WTC11 (cell line): ENCODE measurements at regions of chr18 and their contacts with region 1.

Region 1: DNA sequence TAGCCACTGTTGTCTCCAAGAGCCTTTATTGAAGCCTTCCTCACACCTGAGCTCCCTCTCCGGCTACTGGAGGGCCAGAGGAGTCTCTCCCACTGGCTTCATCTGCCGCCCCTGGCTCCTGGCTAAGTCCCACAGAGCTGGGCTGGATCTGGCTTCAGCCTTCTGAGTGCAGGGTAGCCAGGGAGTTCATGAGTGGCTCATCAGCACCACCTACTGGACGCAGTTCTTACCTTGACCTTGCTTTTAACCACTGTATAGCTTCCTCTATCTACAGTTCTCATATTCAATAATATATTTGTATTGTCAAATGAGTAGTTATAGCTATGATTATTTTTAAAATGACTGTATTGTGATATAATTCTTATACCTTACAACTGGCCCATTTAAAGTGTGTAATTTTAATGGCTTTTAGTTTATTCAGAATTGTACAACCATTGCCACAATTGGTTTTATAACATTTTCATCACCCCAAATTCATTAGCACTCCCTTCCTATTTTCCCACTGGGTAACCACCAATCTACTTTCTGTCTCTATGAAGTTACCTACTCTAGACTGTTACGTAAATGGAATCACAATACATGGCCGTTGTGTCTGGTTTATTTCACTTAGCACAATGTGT is 17.7 kb downstream of the CNDP1 start:
- DNase-seq: peak; percentile 87
- ATAC-seq: peak; percentile 100
- H3K4me3 Mint-ChIP-seq: no peak overlapping the region
- H3K27ac Mint-ChIP-seq: no peak overlapping the region
- H3K4me1 Mint-ChIP-seq: no peaks in the 10 kb centered on the region; the same call in 1 of the 2 replicates
- H3K27me3 Mint-ChIP-seq: peaks cover 11% of the 10 kb centered on the region
- CTCF ChIP-seq: peak; percentile 77

Region 2: DNA sequence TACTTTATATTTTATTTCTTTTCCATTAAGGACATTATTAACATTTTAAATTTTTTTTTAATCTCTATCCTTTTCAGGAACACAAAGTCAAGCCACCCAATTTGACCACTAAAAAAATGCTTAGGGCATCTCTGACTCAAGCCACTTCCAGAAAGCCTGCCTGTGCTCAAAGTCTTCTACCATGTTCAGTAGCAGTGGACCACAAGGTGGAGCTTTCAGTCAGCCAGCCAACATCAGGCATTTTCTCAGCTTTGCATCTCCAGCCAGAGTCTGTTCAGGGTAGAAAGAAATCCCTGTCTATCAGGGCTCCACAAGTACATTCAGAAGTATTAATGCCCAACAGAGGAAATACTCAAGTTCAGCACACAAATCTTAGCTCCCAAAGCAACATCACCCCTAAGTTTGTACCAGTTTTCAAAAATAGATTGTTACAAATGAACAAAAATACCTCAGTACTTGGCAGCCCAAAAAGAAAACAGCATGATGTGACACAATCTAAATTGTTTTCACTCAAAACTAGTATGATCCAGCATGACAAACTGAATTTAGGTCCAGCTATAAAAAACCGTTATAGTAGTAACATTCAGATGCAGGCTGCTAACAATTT is 198.8 kb before region 1 on chr18:
- CTCF ChIA-PET with region 1: interaction called, 40 read pairs
- POLR2A ChIA-PET with region 1: interaction called, 3 read pairs
- DNase-seq: peak; percentile 53
- ATAC-seq: peak; percentile 93
- H3K4me3 Mint-ChIP-seq: no peak overlapping the region
- H3K27ac Mint-ChIP-seq: no peak overlapping the region
- H3K4me1 Mint-ChIP-seq: peaks cover 3% of the 10 kb centered on the region
- H3K27me3 Mint-ChIP-seq: no peaks in the 10 kb centered on the region
- CTCF ChIP-seq: no peak

Region 3: DNA sequence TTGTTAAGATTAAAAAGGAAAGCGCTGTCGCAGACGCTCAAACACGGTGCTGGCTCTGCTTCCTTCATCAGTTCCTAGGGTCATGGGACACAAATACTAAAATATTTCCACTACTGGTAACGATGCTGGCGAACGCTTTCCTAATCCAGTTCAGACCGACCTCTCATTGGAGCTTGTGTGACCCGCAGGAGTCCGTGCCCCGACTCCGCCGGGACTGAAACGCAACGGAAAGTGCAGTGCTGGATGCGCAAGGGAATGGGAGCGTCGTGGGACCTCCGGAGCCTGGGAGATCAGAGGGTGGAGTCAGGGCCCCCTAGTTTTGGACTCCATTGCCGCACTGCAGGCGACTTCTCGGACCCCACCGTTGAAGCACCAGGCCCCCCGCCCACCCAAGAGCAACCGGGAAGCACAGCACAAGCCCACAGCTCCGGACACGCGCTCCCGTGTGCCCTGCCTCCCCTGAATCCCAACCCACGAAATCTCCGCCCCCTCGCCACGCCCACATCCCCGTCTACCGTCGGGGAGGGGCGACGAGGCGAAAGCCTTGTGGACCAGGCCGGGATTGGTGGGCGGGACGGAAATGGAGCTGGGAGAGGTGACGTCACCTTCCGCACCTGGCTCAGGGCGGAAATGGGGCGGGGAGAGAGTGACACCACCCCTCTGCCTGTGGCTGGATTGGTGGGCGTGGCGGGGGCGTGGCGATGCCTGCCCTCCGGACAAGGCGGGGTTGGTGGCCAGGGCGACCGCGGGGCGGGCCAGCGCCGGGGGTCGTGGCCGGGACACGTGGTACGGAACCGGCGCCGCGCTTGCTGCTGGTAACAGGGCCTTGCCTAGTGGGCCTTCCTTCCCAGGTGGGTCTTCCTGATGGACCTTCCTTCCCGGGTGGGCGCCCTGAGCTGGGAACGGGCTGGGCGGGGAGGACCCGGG is 56.2 kb before region 1 on chr18 and contains the start of gene CNDP2:
- CTCF ChIA-PET with region 1: interaction called, 22 read pairs
- POLR2A ChIA-PET with region 1: interaction called, 6 read pairs
- DNase-seq: peak; percentile 100
- ATAC-seq: peak; percentile 92
- H3K4me3 Mint-ChIP-seq: peak within 1 kb of the TSS; percentile 96
- H3K27ac Mint-ChIP-seq: peak within 1 kb of the TSS; percentile 98
- H3K4me1 Mint-ChIP-seq: peaks cover 38% of the 10 kb centered on the region
- H3K27me3 Mint-ChIP-seq: no peaks in the 10 kb centered on the region
- CTCF ChIP-seq: no peak
- total RNA-seq, gene CNDP2: 228 to 248 TPM (median 229 TPM) in 3 replicates

Region 4: GRCh38 chr18:74534981-74535649 is 16.9 kb before region 1 on chr18:
- CTCF ChIA-PET with region 1: interaction called, 20 read pairs
- POLR2A ChIA-PET with region 1: no interaction called
- DNase-seq: no peak
- ATAC-seq: no peak
- H3K4me3 Mint-ChIP-seq: no peak overlapping the region
- H3K27ac Mint-ChIP-seq: no peak overlapping the region
- H3K4me1 Mint-ChIP-seq: 0 out of 2 replicates have a peak, but pooled peaks cover 4% of the 10 kb centered on the region
- H3K27me3 Mint-ChIP-seq: no peaks in the 10 kb centered on the region
- CTCF ChIP-seq: no peak

Region 5: GRCh38 chr18:74631623-74632283 is 79.7 kb after region 1 on chr18:
- CTCF ChIA-PET with region 1: no interaction called
- POLR2A ChIA-PET with region 1: no interaction called
- DNase-seq: no peak
- ATAC-seq: no peak
- H3K4me3 Mint-ChIP-seq: no peak overlapping the region
- H3K27ac Mint-ChIP-seq: peak overlapping the region; percentile 70; the same call in 1 of the 2 replicates
- H3K4me1 Mint-ChIP-seq: peaks cover 16% of the 10 kb centered on the region
- H3K27me3 Mint-ChIP-seq: no peaks in the 10 kb centered on the region
- CTCF ChIP-seq: no peak